Activated CD4-positive, alpha-beta T cell treated with anti-CD3 and anti-CD28 coated beads, Interleukin-2, amount 10 ng/mL, durations not matched to agents 7 days and 5 days (primary cell): ENCODE measurements at regions of chr12 and their contacts with region 1.

Region 1: DNA sequence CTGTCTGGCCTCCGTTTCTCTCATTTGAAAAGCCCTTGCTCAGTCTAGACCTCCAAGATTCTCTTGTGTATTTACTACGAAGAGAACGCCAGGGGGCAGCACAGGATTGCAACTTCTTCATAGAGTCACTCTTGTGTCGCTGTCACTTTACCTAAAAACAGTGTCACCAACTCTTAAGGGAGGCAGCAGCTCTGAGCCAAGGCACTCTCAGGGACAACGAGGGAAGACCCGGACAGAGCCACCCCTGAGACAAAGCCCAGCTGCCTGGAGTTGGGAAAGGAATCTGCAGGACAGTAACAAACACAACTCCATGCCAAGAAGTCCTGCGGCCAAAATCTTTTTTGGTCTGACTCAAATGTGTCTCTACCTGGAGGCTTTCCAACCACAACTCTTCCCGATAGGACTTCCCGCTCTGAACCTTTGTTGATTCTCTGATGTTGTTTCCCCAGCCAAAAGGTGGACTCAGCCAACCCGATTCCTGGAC is 9.6 kb upstream of the RPAP3 start:
- DNase-seq: peak; percentile 87
- H3K4me3 Mint-ChIP-seq: no peak overlapping the region
- H3K27ac Mint-ChIP-seq: peak overlapping the region; percentile 63
- H3K4me1 Mint-ChIP-seq: peaks cover 31% of the 10 kb centered on the region
- H3K27me3 Mint-ChIP-seq: no peaks in the 10 kb centered on the region

Region 2: GRCh38 chr12:47686645-47687240 is 28.7 kb before region 1 on chr12:
- CTCF ChIA-PET with region 1: no interaction called
- POLR2A ChIA-PET with region 1: no interaction called
- DNase-seq: peak; percentile 49
- H3K4me3 Mint-ChIP-seq: no peak overlapping the region
- H3K27ac Mint-ChIP-seq: no peak overlapping the region
- H3K4me1 Mint-ChIP-seq: peaks cover 4% of the 10 kb centered on the region
- H3K27me3 Mint-ChIP-seq: no peaks in the 10 kb centered on the region

Region 3: DNA sequence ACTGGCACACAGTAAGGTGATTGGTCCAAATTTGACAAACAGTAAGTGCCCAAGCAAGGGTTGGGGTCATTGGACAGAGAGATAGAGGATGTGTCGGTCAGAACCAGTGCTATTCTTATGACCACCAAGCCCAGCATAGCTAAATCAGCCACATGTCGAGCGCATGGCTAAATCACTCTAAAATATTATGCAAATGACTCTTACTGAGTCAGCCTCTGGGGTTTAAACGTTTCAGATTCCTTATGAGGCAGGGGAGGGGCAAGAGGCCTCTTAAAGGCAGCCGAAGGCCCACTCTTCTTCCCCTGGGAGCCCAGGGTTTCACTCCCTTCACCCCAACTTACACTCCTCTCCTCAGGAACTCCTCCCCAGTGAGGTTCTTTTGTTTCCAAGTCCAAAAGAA is 10.5 kb after region 1 on chr12:
- CTCF ChIA-PET with region 1: interaction called, 18 read pairs
- POLR2A ChIA-PET with region 1: no interaction called
- DNase-seq: no peak
- H3K4me3 Mint-ChIP-seq: no peak overlapping the region
- H3K27ac Mint-ChIP-seq: no peak overlapping the region
- H3K4me1 Mint-ChIP-seq: peaks cover 25% of the 10 kb centered on the region
- H3K27me3 Mint-ChIP-seq: no peaks in the 10 kb centered on the region

Region 4: GRCh38 chr12:47734725-47735480 is 19.5 kb after region 1 on chr12:
- CTCF ChIA-PET with region 1: interaction called, 36 read pairs
- POLR2A ChIA-PET with region 1: no interaction called
- DNase-seq: no peak
- H3K4me3 Mint-ChIP-seq: no peak overlapping the region
- H3K27ac Mint-ChIP-seq: no peak overlapping the region
- H3K4me1 Mint-ChIP-seq: peaks cover 1% of the 10 kb centered on the region
- H3K27me3 Mint-ChIP-seq: no peaks in the 10 kb centered on the region

Region 5: GRCh38 chr12:47758834-47759690 is 43.6 kb after region 1 on chr12 and contains the start of gene RAPGEF3:
- CTCF ChIA-PET with region 1: interaction called, 18 read pairs
- POLR2A ChIA-PET with region 1: no interaction called
- DNase-seq: peak; percentile 71
- H3K4me3 Mint-ChIP-seq: peak within 1 kb of the TSS; percentile 72
- H3K27ac Mint-ChIP-seq: no peak within 1 kb of the TSS
- H3K4me1 Mint-ChIP-seq: peaks cover 28% of the 10 kb centered on the region
- H3K27me3 Mint-ChIP-seq: peaks cover 4% of the 10 kb centered on the region
- total RNA-seq, gene RAPGEF3: 0.15 TPM in 1 of 2 experiments, not detected in the other

Region 6: GRCh38 chr12:47767216-47767724 is 51.8 kb after region 1 on chr12:
- CTCF ChIA-PET with region 1: interaction called, 24 read pairs
- POLR2A ChIA-PET with region 1: no interaction called
- DNase-seq: peak; percentile 81
- H3K4me3 Mint-ChIP-seq: no peak overlapping the region
- H3K27ac Mint-ChIP-seq: no peak overlapping the region
- H3K4me1 Mint-ChIP-seq: peaks cover 15% of the 10 kb centered on the region
- H3K27me3 Mint-ChIP-seq: peaks cover 13% of the 10 kb centered on the region

Region 7: GRCh38 chr12:47773062-47773857 is 57.8 kb after region 1 on chr12 and contains the start of gene SLC48A1:
- CTCF ChIA-PET with region 1: interaction called, 15 read pairs
- POLR2A ChIA-PET with region 1: no interaction called
- DNase-seq: peak; percentile 67
- H3K4me3 Mint-ChIP-seq: peak within 1 kb of the TSS; percentile 88
- H3K27ac Mint-ChIP-seq: peak within 1 kb of the TSS; percentile 80
- H3K4me1 Mint-ChIP-seq: peaks cover 40% of the 10 kb centered on the region
- H3K27me3 Mint-ChIP-seq: peaks cover 9% of the 10 kb centered on the region
- total RNA-seq, gene SLC48A1: 7.9 to 9.1 TPM

Region 8: DNA sequence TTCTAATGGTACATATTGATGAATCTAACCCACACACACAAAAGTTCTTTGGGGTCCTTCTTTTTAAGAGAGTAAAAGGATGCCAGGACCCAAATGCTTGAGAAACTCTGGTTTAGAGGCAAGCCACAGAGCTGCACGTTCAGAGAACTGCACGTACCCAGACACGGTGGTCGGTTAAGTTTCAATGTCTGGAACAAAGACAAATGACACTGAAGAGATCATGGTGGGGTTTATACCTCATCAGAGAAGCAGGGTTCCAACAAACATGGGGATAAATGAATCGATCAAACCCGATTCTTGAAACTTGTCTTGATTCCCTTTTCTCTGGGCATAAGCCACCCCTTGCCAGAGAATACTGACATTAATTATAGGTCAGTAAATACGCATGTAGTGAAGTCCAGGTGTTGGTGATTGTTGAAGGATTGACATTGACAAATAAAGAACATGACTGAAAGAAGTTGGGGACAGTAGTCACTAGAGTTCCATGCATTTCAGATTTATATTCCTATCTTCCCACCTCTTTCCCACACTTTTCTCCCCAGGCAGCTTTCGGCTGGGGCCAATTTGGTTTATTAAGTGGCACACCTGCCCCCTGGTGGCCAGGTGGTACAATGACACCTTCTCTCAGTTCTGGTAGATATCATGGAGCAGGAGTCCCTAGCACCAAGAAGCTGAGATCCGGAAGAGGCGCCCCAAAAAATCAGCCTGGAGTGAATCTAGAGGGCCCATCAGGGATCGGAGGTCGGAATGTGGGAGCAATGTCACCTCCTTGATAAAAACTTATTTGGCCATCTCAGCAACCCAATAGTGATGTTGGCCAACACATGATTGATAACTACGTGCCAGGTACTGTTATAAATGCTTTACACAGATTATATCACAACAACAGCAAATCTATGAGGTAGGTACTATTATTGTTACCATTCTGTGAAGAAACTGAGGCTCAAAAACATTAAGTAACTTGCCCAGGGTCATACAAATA is 122.0 kb after region 1 on chr12:
- CTCF ChIA-PET with region 1: interaction called, 11 read pairs
- POLR2A ChIA-PET with region 1: no interaction called
- DNase-seq: peak; percentile 70
- H3K4me3 Mint-ChIP-seq: no peak overlapping the region
- H3K27ac Mint-ChIP-seq: peak overlapping the region; percentile 11
- H3K4me1 Mint-ChIP-seq: peaks cover 57% of the 10 kb centered on the region
- H3K27me3 Mint-ChIP-seq: no peaks in the 10 kb centered on the region